ENCODE measurements at regions of chr1 and their contacts with region 1.

Region 1: DNA sequence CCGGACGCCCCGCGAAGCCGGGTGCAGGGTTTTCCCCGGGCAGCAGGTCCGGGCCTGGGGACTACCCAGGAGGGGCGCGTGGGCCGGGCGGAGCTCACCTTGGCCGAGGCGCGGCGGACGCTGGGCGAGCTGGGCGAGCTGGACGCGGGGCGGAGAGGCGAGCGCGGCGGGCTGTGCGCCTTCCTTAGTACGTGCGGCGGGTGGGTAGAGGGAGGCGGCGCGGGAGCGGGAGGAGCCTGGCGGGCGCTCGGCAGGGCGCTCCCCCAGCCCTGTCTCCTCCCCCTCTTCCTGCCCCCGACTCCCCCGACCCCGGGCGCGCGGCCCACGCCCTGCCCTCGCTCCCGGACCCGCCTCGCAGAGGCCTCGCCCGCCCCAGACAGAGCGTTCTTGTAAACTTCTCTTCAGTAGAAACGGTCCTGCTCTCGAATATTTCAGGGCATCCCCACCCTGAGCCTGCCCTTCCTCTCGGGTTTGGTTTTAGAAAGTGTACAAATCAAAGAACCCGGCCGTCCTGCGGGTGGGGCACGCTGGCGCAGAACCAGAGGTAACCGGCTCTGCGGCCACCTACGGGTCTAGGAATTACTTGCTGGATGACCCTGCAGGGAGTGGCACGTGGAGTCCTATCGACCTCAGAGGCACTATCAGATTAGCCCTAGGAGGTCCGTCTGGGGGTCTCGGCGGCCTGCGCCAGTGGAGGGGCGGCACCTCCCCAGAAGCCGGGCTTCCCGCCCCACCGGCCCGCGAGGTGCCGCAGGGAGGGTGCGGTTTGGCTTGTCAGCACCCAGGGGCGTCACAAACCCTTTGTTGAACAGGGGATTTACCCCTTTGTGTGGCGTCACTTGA is at the start of gene S100A10:
- DNase-seq: peak in 1 of 2 experiments; percentile 73
- H3K4me3 ChIP-seq: peak within 1 kb of the TSS; percentile 69 to 90 (median 76)
- H3K27ac ChIP-seq: peak within 1 kb of the TSS; percentile 21; the same call in 1 of the 2 replicates
- H3K4me1 ChIP-seq: peaks cover 3 to 27% (median 11%) of the 10 kb centered on the region in 4 experiments
- H3K27me3 ChIP-seq: peaks cover 0 to 13% (median 6%) of the 10 kb centered on the region in 4 experiments; a peak in 4 of 7 replicates
- CTCF ChIP-seq: no peak
- EP300 ChIP-seq: no peak
- POLR2A ChIP-seq: peak in 1 of 2 experiments; percentile 42; a peak in 2 of 3 replicates
- RAD21 ChIP-seq: no peak
- total RNA-seq, gene S100A10: 231 and 233 TPM in 2 replicates

Region 2: DNA sequence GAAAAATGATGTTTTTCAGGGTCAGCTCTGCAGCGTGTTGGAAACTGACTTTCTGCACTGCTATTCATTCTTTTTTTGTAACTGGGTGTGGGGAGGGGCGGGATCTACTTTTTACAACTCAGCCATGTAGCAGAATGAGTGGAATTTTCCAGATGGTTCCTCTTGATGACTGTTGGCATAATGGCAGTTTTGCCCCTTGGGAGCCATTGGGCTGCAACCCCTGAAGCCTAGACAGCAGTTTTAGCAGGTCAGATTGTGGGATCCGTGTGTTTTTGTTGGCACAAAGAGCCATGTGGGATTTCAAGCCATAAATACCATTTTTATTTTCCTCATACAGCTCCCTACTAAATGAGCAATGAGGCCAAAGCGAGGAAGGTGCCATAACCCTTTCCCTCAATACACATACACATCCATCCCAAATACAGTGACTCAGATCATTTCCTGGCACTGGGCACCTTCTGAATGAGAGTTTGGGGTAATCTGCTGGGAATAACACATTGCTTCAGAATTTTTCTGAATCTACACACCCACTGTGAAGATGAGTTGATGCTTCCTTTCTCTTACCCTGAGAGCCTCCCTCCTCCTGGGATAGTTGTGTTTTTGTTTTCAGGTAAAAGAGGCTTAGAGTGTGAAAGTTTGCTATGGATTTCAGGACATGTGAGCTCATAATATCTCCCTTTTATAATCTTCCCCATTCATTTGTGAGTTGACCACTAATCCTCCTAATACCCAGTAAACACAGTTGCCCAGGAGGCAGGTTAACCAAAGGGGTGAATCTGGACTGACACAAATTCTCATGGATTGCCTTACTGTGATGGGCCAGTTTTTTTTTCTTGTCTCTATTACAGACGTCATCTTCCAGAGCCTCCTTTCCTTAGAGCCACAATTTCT is 13.3 kb before region 1 on chr1:
- CTCF ChIA-PET with region 1: interaction called, 292 read pairs
- POLR2A ChIA-PET with region 1: interaction called, 12 read pairs
- DNase-seq: no peak
- H3K4me3 ChIP-seq: no peak overlapping the region
- H3K27ac ChIP-seq: no peak overlapping the region
- H3K4me1 ChIP-seq: peaks cover 0 to 3% (median 0%) of the 10 kb centered on the region in 4 experiments; a peak in 1 of 7 replicates
- H3K27me3 ChIP-seq: no peaks in the 10 kb centered on the region
- CTCF ChIP-seq: no peak
- EP300 ChIP-seq: no peak
- POLR2A ChIP-seq: no peak
- RAD21 ChIP-seq: no peak

Measured in H1 (cell line).